ENCODE measurements at regions of chr3 and their contacts with region 1.

Region 1: DNA sequence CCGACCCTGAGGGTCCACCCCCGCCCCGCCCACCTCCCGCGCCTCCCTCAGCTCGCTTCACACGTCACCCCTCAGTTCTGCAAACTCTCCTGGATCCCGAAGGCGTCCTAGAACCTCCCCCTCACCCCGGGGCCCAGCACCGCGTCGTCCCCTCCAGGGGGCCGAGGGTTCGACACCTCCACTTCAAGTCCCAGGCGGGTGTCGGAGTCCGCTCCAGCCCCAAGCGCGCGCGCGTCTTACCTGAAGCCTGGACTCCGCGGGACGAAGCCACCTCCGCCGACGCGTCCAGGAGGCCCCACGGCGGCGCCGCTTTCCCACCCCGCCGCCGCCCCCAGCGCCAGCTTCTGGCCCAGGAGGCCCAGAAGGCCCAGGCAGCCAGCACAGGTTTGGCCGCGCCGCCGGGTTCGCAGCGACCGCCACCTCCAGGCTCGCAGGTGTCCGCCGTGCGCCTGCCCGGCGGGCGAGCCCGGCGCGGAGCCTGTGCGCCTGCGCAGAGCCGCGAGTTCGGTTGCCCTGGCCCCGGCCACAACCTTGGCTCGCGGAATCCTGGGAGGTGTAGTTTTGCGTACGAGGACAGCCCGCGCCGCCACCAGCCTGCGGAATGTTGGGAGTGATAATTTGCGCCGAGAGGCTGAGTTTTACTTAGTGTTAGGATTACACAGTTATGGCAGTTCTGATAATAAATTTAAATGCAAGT is at the start of gene POMGNT2:
- DNase-seq: peak; percentile 94 to 96
- ATAC-seq: peak; percentile 95
- H3K4me3 ChIP-seq: peak within 1 kb of the TSS; percentile 66 to 87
- H3K27ac ChIP-seq: no peak within 1 kb of the TSS
- H3K4me1 ChIP-seq: no peaks in the 10 kb centered on the region
- H3K27me3 ChIP-seq: no peaks in the 10 kb centered on the region
- total RNA-seq, gene POMGNT2: 9.0 to 12.0 TPM

Region 2: DNA sequence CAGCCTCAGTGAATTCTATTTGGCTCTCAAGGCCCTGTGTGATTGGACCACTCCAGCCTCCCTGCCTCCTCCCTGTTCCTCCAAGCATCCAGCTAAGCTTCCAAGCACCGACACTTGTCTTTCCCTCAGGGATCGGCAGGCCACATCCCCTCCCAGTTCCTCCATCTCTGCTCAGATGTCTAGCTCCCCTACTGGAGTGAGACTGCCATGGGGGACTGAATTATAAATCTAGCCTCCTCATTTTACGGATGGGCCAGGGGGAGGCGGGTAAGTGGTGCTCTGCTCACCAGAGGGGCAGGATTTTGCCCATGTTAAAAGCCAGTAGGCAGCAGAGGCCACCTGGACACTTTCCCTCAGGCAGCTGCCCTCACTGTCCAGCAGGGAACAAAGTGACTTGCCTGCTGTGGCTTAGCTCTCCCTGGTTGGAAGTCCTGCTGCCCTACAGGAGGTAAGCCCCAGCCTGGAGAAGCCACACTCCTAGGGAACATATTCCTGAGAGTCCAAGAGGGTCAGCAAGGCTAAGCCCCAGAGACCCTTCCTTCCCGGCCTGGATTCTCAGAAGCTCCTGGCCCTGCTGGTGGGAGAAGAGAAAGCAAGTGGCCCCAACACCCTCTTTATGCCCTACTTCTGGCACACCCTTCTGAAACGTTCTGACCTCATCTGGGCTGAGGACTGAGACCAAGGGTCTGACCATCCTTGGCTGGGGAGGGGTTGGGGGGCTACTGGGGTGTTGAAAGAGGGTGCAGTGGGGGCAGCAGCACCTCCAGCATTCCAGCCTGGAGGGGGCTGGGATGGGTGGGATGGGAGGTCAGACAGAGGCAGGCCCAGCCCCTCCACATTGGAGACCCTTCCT is 394.0 kb before region 1 on chr3:
- intact Hi-C with region 1: no loop called
- DNase-seq: peak in 1 of 2 donors; percentile 53
- ATAC-seq: no peak
- H3K4me3 ChIP-seq: no peak overlapping the region
- H3K27ac ChIP-seq: no peak overlapping the region
- H3K4me1 ChIP-seq: no peaks in the 10 kb centered on the region
- H3K27me3 ChIP-seq: no peaks in the 10 kb centered on the region

Region 3: DNA sequence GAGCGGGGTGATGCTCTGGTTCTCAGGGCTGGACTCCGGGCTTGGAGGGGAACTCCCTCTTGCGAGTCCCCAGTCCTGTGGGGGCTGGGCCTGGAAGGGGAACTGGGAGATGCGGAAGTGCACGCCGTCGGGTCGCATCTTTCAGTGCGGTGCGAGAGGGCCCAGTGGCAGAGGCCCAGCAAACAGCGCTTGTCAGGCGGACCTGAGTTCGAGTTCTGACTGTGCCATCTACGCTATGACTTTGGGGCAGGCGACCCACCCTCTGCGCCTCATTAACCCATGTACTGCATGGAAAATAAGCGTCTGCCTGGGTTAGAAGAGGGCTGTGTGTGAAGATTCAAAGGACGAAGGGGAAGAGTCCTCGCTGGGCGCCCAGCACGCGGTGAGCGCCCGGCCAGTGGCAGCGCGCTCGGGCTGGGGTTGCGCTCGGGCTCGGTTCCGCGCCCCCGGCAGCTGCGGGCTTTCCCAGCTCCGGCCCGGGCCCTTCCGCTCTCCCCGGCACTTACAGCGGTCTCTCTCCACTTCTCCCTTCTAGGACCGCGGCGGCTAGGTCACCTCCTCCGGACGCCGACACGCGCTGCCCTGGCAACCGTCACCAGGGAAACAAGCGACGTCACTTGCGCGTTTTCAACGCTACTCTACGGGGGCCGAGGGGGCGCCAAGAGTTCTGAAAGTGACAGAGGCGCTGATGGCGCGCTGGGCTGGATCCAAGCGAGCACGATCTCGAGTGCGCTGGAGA is 332.9 kb before region 1 on chr3 and contains the start of gene CCDC13:
- intact Hi-C with region 1: loop called in 1 of 2 experiments (anchors 10 kb)
- DNase-seq: peak; percentile 98 to 99
- ATAC-seq: peak; percentile 96
- H3K4me3 ChIP-seq: peak within 1 kb of the TSS; percentile 21 to 45
- H3K27ac ChIP-seq: no peak within 1 kb of the TSS
- H3K4me1 ChIP-seq: no peaks in the 10 kb centered on the region
- H3K27me3 ChIP-seq: no peaks in the 10 kb centered on the region
- total RNA-seq, gene CCDC13: 1.3 to 2.5 TPM

Region 4: DNA sequence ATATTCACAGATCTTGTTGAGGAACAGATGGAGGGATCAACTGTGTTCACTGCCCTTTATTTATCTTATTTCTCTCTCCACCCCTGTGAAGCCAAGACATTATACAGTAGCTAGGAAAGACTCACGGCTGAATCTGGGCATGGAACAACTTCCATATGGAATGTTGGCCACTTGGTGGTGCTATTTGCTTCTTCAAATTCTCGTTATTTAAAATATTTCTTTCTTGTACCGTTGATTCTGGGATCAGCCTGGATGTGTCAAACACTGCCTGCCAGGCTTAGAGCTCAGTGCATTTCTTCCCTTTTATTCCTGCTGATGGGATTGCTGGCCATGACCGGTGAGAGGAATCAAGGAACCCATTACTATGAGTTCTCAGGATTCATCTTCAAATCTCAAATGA is 144.1 kb before region 1 on chr3:
- intact Hi-C with region 1: loop called in 1 of 2 experiments (anchors 10 kb)
- DNase-seq: no peak
- ATAC-seq: peak; percentile 69
- H3K4me3 ChIP-seq: no peak overlapping the region
- H3K27ac ChIP-seq: no peak overlapping the region
- H3K4me1 ChIP-seq: no peaks in the 10 kb centered on the region
- H3K27me3 ChIP-seq: no peaks in the 10 kb centered on the region

Region 5: DNA sequence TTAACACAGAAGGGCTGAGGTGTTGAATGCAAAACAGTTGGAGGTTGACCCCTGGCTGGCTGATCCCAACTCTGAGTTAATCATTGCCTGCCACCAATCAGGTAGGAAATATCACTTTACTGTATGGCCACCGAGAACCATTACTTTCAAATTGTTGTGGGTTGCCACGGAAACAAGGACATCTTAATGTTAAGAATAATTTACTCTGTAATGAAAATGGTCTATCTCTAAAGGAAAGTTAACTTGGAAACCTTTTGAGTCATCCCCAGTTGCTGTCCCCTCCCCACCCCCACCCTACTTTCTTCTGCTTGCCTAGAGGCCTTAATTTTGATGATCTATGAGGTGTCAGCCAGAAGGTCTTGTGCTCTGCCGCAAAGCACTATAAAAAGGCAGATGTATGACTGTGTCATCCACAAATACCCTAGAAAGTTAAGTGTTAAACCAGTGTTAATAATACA is 101.9 kb after region 1 on chr3:
- intact Hi-C with region 1: no loop called
- DNase-seq: no peak
- ATAC-seq: no peak
- H3K4me3 ChIP-seq: no peak overlapping the region
- H3K27ac ChIP-seq: no peak overlapping the region
- H3K4me1 ChIP-seq: no peaks in the 10 kb centered on the region
- H3K27me3 ChIP-seq: no peaks in the 10 kb centered on the region

Region 6: GRCh38 chr3:43286115-43286840 is 180.5 kb after region 1 on chr3 and contains the start of gene SNRK:
- intact Hi-C with region 1: loop called in 1 of 2 experiments (anchors 5 kb)
- DNase-seq: peak; percentile 89 to 97
- ATAC-seq: peak; percentile 96
- H3K4me3 ChIP-seq: peak within 1 kb of the TSS; percentile 93 to 95
- H3K27ac ChIP-seq: peak within 1 kb of the TSS; percentile 9 to 59
- H3K4me1 ChIP-seq: peaks cover 3 to 7% of the 10 kb centered on the region in 2 donors
- H3K27me3 ChIP-seq: no peaks in the 10 kb centered on the region
- total RNA-seq, gene SNRK: 66.9 to 95.1 TPM

Region 7: GRCh38 chr3:43423142-43423541 is 317.4 kb after region 1 on chr3:
- intact Hi-C with region 1: no loop called
- DNase-seq: peak; percentile 63 to 85
- ATAC-seq: peak; percentile 79
- H3K4me3 ChIP-seq: no peak overlapping the region
- H3K27ac ChIP-seq: no peak overlapping the region
- H3K4me1 ChIP-seq: peaks cover 3 to 4% of the 10 kb centered on the region in 2 donors
- H3K27me3 ChIP-seq: no peaks in the 10 kb centered on the region